Naive thymus-derived CD4-positive, alpha-beta T cell (primary cell): ENCODE measurements at regions of chr11 and their contacts with region 1.

Region 1: DNA sequence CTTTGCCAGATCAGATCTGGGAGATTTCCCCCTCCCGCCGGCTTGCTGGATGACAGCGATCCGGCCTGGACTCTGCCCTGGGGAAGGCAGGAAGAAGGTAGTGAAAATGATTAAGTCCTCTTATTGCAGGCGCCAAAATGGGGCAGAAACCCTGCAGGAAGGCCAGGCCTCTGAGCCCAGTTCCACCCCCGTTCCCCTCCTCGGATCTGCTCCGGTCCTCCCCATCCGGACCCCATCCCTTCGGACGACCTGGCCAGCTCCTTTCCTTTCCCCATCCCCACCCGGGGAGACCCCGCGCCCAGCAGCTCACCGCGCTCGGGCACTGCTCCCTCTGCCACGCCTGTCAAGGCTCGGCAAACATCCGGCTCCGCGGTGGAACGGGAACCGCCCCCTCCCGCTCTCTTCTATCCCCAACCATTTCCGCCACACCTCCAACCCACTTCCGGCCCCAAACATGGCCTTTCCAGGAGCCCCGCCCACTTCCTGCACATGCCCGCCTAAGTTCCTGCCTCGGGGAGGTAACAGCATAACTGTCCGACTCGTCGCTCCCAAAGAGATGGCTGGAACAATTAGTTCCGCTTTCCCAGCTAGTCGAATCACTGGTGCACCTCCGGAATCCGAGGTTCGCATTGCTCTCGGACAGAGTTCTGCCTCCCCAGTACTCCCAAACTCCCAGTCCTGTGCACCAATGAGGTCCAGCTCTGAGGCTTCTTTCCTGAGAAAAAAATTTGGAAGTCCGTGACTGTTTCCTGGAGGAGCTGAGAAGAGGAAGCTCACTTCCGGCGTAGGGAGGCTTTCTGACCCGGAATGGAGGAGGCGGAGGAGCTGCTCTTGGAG is at the starts of genes ARHGAP1 and ZNF408:
- DNase-seq: peak; percentile 94 to 99 (median 99)
- ATAC-seq: peak; percentile 99
- H3K4me3 ChIP-seq: peak within 1 kb of the TSS; percentile 95
- H3K4me3 Mint-ChIP-seq: peak within 1 kb of the TSS; percentile 91 to 100 (median 99)
- H3K27ac ChIP-seq: peak within 1 kb of the TSS; percentile 75
- H3K27ac Mint-ChIP-seq: peak within 1 kb of the TSS; percentile 82 to 98 (median 96)
- H3K4me1 ChIP-seq: peaks cover 33 to 38% of the 10 kb centered on the region in 2 donors
- H3K4me1 Mint-ChIP-seq: peaks cover 40 to 71% (median 54%) of the 10 kb centered on the region in 7 donors
- H3K27me3 ChIP-seq: no peaks in the 10 kb centered on the region
- H3K27me3 Mint-ChIP-seq: peaks cover 0 to 5% (median 0%) of the 10 kb centered on the region in 5 donors
- total RNA-seq, gene ARHGAP1: 44.6 to 82.5 (median 64.6) TPM
- total RNA-seq, gene ZNF408: 7.8 to 20.0 (median 16.6) TPM

Region 2: GRCh38 chr11:45834298-45834756 is 866.1 kb before region 1 on chr11:
- CTCF ChIA-PET with region 1: no interaction called
- POLR2A ChIA-PET with region 1: no interaction called
- intact Hi-C with region 1: loop called in 1 of 2 experiments (anchors 5 kb)
- DNase-seq: peak in 1 of 9 donors; percentile 27
- ATAC-seq: peak; percentile 47
- H3K4me3 ChIP-seq: no peak overlapping the region
- H3K4me3 Mint-ChIP-seq: peak overlapping the region in 5 of 10 donors; percentile 0 to 88 (median 29)
- H3K27ac ChIP-seq: no peak overlapping the region
- H3K27ac Mint-ChIP-seq: peak overlapping the region in 3 of 9 donors; percentile 23 to 92 (median 71)
- H3K4me1 ChIP-seq: no peaks in the 10 kb centered on the region
- H3K4me1 Mint-ChIP-seq: peaks cover 7 to 40% (median 11%) of the 10 kb centered on the region in 7 donors
- H3K27me3 ChIP-seq: no peaks in the 10 kb centered on the region
- H3K27me3 Mint-ChIP-seq: peaks cover 0 to 31% (median 0%) of the 10 kb centered on the region in 5 donors

Region 3: GRCh38 chr11:46346886-46347636 is 353.4 kb before region 1 on chr11 and contains the start of gene DGKZ:
- CTCF ChIA-PET with region 1: no interaction called
- POLR2A ChIA-PET with region 1: interaction called, 3 read pairs
- intact Hi-C with region 1: loop called (anchors 1 to 5 kb)
- DNase-seq: peak; percentile 85 to 100 (median 96)
- ATAC-seq: peak; percentile 92
- H3K4me3 ChIP-seq: peak within 1 kb of the TSS; percentile 91
- H3K4me3 Mint-ChIP-seq: peak within 1 kb of the TSS; percentile 93 to 97 (median 95)
- H3K27ac ChIP-seq: peak within 1 kb of the TSS; percentile 83
- H3K27ac Mint-ChIP-seq: peak within 1 kb of the TSS; percentile 89 to 98 (median 94)
- H3K4me1 ChIP-seq: peaks cover 46 to 79% of the 10 kb centered on the region in 2 donors
- H3K4me1 Mint-ChIP-seq: peaks cover 61 to 85% (median 75%) of the 10 kb centered on the region in 7 donors
- H3K27me3 ChIP-seq: no peaks in the 10 kb centered on the region
- H3K27me3 Mint-ChIP-seq: peaks cover 0 to 3% (median 0%) of the 10 kb centered on the region in 5 donors
- total RNA-seq, gene DGKZ: 146 to 291 (median 263) TPM

Region 4: DNA sequence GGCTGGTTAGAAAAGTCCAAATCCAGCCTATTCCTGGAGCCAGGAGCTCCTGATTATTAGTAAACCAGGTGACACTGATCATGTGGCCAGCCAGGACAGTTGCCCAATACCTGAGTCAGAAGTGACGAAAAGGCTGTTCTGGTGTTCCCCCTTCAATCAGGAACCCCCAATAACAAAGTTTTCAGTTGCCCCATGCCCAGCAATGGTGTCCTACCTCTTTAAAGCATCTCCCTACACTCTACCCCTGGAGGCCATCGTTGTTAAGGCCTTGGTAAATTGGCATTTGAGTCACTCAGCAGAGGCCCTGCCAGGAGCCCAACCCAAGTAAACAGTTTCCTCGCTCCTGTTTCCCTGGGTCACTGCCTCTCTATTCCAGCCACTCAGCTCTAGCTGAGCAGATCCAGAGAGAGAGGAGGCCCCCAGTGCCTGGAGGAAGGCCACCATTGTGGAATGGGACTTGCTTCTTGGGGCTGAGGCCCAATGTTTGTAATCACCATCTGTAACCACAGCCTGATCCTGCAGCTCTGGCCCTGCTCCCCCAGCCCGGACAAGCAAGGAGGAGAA is 25.1 kb before region 1 on chr11:
- CTCF ChIA-PET with region 1: interaction called, 20 read pairs
- POLR2A ChIA-PET with region 1: interaction called, 135 read pairs
- intact Hi-C with region 1: loop called (anchors 1 kb)
- DNase-seq: no peak
- ATAC-seq: no peak
- H3K4me3 ChIP-seq: no peak overlapping the region
- H3K4me3 Mint-ChIP-seq: peak overlapping the region in 7 of 10 donors; percentile 18 to 74 (median 67)
- H3K27ac ChIP-seq: peak overlapping the region; percentile 63
- H3K27ac Mint-ChIP-seq: peak overlapping the region; percentile 85 to 96 (median 91)
- H3K4me1 ChIP-seq: peaks cover 49 to 69% of the 10 kb centered on the region in 2 donors
- H3K4me1 Mint-ChIP-seq: peaks cover 45 to 77% (median 70%) of the 10 kb centered on the region in 7 donors
- H3K27me3 ChIP-seq: no peaks in the 10 kb centered on the region
- H3K27me3 Mint-ChIP-seq: no peaks in the 10 kb centered on the region

Region 5: GRCh38 chr11:46930089-46930488 is 229.6 kb after region 1 on chr11:
- CTCF ChIA-PET with region 1: no interaction called
- POLR2A ChIA-PET with region 1: no interaction called
- intact Hi-C with region 1: no loop called
- DNase-seq: no peak
- ATAC-seq: no peak
- H3K4me3 ChIP-seq: no peak overlapping the region
- H3K4me3 Mint-ChIP-seq: no peak overlapping the region
- H3K27ac ChIP-seq: no peak overlapping the region
- H3K27ac Mint-ChIP-seq: peak overlapping the region in 1 of 9 donors; percentile 43
- H3K4me1 ChIP-seq: no peaks in the 10 kb centered on the region
- H3K4me1 Mint-ChIP-seq: peaks cover 0 to 4% (median 0%) of the 10 kb centered on the region in 7 donors
- H3K27me3 ChIP-seq: no peaks in the 10 kb centered on the region
- H3K27me3 Mint-ChIP-seq: peaks cover 12 to 39% (median 32%) of the 10 kb centered on the region in 5 donors

Region 6: DNA sequence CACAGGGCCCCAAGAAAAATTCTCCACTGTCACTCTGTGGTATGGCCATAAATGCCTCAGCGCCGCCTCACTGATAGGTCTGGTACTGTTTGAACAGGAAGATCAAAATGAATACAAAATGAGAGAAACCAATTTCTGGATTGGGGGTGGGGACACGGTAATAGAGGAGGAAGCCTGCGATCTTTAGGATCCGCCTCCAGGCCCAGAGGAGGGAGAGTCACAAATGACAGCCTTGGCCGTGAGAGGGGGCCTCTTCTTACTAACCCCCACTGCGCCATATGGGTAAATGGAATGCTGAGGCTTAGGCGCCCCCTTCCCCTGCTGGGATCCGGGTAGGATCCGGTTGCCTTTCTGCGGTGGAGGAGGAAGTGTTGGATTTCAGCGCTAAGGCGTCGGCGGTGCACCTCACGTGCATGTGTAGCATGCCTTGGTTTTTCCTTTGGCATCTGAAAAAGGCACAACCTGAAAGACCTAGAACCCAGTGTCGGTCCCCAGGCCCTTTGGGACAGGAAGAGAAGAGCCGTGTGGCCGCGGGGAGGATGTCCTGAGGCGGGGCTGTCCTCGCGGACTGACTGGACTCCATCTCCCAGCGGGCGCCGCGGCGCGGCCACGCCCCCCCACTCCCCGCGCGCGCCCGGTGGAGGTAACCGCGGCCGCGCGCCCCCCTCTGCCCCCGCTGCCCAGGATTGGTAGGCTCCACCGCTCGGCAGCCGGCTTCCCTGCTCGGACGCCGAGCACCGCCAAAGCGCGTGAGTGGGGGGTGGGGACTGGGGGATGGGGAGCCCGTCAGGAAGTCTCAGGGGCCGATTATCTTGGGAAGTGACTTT is 568.8 kb after region 1 on chr11:
- CTCF ChIA-PET with region 1: no interaction called
- POLR2A ChIA-PET with region 1: no interaction called
- intact Hi-C with region 1: loop called (anchors 1 kb)
- DNase-seq: peak; percentile 82 to 89 (median 87)
- ATAC-seq: peak; percentile 82
- H3K4me3 ChIP-seq: peak overlapping the region; percentile 65
- H3K4me3 Mint-ChIP-seq: peak overlapping the region; percentile 78 to 97 (median 87)
- H3K27ac ChIP-seq: peak overlapping the region; percentile 95
- H3K27ac Mint-ChIP-seq: peak overlapping the region; percentile 93 to 99 (median 96)
- H3K4me1 ChIP-seq: peaks cover 27 to 43% of the 10 kb centered on the region in 2 donors
- H3K4me1 Mint-ChIP-seq: peaks cover 38 to 62% (median 59%) of the 10 kb centered on the region in 7 donors
- H3K27me3 ChIP-seq: no peaks in the 10 kb centered on the region
- H3K27me3 Mint-ChIP-seq: no peaks in the 10 kb centered on the region

Region 7: DNA sequence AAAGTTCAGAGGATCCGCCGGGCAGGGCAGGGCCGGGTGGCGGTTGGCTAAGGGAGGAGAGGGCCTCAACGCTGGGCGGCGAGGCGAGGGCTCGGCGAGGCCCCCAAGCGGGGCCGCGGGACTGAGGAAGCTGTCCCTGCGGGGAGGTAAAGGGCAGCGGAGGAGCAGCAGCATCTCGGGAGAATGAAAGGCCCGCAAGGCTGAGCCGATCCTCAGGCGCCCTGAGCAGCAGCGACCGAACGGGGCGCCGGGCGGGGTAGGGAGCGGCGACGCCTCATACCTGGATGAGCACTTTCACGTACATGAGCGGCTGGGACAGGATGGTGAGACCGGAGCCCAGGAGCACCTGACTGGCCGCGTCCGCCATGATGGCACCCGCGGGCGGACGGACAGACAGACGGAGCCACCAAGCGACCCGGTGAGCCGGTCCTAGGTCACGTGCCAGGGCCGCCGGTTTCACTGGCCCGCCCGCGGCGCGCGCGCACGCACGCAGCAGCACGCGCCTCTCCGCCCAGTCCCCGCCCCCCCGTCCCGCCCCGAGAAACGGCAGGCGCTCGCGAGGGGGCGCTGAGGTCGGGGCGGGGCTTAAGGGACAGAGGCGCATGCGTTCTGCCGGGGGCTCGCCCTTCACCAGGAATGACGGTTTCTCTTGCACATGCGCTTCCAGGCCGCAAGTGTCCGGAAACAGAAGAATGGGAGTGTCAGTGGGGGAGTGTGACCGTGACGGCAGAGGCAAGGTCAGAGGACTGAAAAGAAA is 941.8 kb after region 1 on chr11 and contains the start of gene MTCH2:
- CTCF ChIA-PET with region 1: no interaction called
- POLR2A ChIA-PET with region 1: no interaction called
- intact Hi-C with region 1: loop called in 1 of 2 experiments (anchors 1 kb)
- DNase-seq: peak; percentile 92 to 97 (median 95)
- ATAC-seq: peak; percentile 97
- H3K4me3 ChIP-seq: peak within 1 kb of the TSS; percentile 85
- H3K4me3 Mint-ChIP-seq: peak within 1 kb of the TSS; percentile 92 to 99 (median 96)
- H3K27ac ChIP-seq: peak within 1 kb of the TSS; percentile 83
- H3K27ac Mint-ChIP-seq: peak within 1 kb of the TSS; percentile 94 to 99 (median 97)
- H3K4me1 ChIP-seq: peaks cover 8 to 11% of the 10 kb centered on the region in 2 donors
- H3K4me1 Mint-ChIP-seq: peaks cover 17 to 32% (median 25%) of the 10 kb centered on the region in 7 donors
- H3K27me3 ChIP-seq: no peaks in the 10 kb centered on the region
- H3K27me3 Mint-ChIP-seq: no peaks in the 10 kb centered on the region
- total RNA-seq, gene MTCH2: 19.8 to 88.6 (median 21.1) TPM